Activated CD4-positive, alpha-beta T cell treated with anti-CD3 and anti-CD28 coated beads for 36 hours (primary cell): ENCODE measurements at regions of chr10 and their contacts with region 1.

Region 1: GRCh38 chr10:29377333-29377961 is 88.6 kb downstream of the LYZL1 start:
- DNase-seq: no peak
- ATAC-seq: peak; percentile 12
- H3K4me3 Mint-ChIP-seq: no peak overlapping the region
- H3K27ac Mint-ChIP-seq: no peak overlapping the region
- H3K4me1 Mint-ChIP-seq: peaks cover 8% of the 10 kb centered on the region
- H3K27me3 Mint-ChIP-seq: peaks cover 5% of the 10 kb centered on the region

Region 2: GRCh38 chr10:28628184-28628893 is 749.1 kb before region 1 on chr10:
- CTCF ChIA-PET with region 1: no interaction called
- POLR2A ChIA-PET with region 1: no interaction called
- intact Hi-C with region 1: no loop called
- DNase-seq: peak; percentile 86
- ATAC-seq: peak; percentile 87
- H3K4me3 Mint-ChIP-seq: no peak overlapping the region
- H3K27ac Mint-ChIP-seq: no peak overlapping the region
- H3K4me1 Mint-ChIP-seq: peaks cover 5% of the 10 kb centered on the region
- H3K27me3 Mint-ChIP-seq: peaks cover 12% of the 10 kb centered on the region

Region 3: DNA sequence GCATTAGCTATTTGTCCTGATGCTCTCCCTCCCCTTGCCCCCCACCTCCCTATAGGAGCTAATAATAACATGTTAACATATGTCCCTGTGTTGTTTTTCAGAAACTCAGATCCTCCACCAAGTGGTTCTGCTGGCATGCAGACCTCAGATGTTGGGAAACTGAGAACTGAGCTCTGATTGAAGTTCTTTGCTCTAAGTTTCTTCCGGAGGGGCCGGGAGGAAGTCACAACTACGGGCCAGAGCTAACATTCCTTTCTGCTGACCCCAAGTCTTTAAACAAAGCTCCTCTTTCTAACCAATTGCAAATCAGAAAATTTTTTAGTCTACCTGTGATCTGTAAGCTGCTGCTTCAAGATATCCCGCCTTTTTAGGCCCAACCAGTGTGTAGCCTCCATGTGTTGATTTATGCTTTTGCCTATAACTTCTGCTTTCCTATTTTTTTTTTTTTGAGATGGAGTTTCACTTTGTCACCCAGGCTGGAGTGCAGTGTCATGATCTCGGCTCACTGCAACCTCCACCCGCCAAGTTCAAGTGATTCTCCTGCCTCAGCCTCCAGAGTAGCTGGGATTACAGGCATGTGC is 21.9 kb before region 1 on chr10:
- CTCF ChIA-PET with region 1: no interaction called
- POLR2A ChIA-PET with region 1: no interaction called
- intact Hi-C with region 1: no loop called
- DNase-seq: no peak
- ATAC-seq: no peak
- H3K4me3 Mint-ChIP-seq: no peak overlapping the region
- H3K27ac Mint-ChIP-seq: no peak overlapping the region
- H3K4me1 Mint-ChIP-seq: no peaks in the 10 kb centered on the region
- H3K27me3 Mint-ChIP-seq: no peaks in the 10 kb centered on the region

Region 4: GRCh38 chr10:29392376-29393021 is 15.1 kb after region 1 on chr10:
- CTCF ChIA-PET with region 1: interaction called, 12 read pairs
- POLR2A ChIA-PET with region 1: no interaction called
- intact Hi-C with region 1: no loop called
- DNase-seq: peak; percentile 60
- ATAC-seq: peak; percentile 63
- H3K4me3 Mint-ChIP-seq: no peak overlapping the region
- H3K27ac Mint-ChIP-seq: no peak overlapping the region
- H3K4me1 Mint-ChIP-seq: no peaks in the 10 kb centered on the region
- H3K27me3 Mint-ChIP-seq: peaks cover 2% of the 10 kb centered on the region

Region 5: DNA sequence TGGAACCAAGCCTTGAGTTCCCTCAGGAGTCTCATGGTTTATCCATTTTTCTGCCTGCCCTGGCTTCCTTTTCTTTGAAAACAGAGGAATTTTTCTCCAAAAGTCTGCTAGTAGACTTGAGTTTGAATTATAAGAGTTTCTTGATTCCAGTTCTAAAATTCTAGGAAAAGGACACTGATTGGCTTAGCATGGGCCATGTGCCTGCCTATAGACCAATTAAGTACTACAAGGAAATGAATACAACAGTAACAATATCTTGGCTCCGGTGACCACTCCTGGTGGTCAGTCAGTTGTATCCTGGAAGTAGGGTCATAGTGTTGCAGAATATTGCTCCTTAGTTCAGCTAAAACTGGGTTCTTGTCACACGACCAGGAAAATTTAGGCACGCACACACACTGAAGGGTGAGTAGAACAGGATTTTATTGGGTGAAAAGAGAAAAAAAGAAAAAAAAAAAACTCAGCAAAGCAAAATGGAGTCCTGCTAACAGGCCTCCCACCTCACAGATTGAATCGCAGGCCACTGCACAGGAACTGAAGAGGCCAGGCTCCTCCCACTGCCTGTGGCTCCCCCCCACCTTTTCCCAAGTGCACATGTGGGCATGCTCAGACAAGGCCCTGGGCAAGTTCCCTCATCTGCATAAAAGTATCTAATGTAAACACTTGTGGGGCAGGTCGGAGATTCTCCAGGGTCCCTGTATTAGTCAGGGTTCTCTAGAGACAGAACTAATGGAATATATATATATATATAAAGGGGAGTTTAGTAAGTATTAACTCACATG is 66.5 kb after region 1 on chr10:
- CTCF ChIA-PET with region 1: interaction called, 10 read pairs
- POLR2A ChIA-PET with region 1: no interaction called
- intact Hi-C with region 1: loop called in 1 of 2 experiments (anchors 2 kb)
- DNase-seq: peak; percentile 21
- ATAC-seq: no peak
- H3K4me3 Mint-ChIP-seq: no peak overlapping the region
- H3K27ac Mint-ChIP-seq: no peak overlapping the region
- H3K4me1 Mint-ChIP-seq: peaks cover 12% of the 10 kb centered on the region
- H3K27me3 Mint-ChIP-seq: no peaks in the 10 kb centered on the region